Lower leg skin (tissue), 4 donors: ENCODE measurements at regions of chr3 and their contacts with region 1.

Region 1: DNA sequence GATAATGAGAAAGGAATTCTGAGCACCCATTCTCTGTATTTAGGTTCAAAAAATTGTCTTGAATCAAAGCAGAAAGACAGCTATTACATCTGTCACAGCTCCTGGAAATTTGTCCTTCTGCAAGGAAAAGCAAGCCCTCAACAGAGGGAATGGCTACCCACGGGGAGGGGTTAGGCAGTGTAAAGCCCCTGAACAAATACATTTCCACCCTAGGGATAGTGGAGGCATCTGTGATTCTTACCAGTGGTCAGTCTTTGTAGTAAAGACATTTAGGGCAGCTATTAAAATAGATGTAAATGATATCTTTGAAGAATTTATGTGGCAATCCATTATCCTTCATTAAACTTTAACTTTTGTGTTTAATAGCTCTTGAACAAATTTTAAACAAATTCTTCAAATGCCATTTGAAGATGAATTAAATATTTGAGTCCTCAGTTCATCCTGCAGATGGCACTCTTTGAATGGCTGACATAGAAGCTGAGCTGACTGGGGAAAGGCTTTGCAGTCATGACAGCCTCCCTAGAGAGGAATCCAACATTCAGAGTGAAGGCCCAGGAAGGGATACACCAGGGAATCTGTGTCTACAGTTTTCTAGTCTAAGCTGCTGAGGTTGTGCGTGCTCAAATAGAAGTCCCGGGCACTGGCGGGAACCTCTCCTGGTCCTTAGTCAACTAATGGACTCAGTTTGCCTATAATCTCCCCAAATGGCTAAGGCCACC is 359.7 kb upstream of the ROPN1 start:
- DNase-seq: no peak
- H3K4me3 ChIP-seq: no peak overlapping the region
- CTCF ChIP-seq: no peak
- POLR2A ChIP-seq: no peak

Region 2: GRCh38 chr3:124467980-124468902 is 116.7 kb after region 1 on chr3:
- intact Hi-C with region 1: loop called (anchors 5 kb)
- DNase-seq: no peak
- H3K4me3 ChIP-seq: no peak overlapping the region
- CTCF ChIP-seq: peak in 1 of 3 donors; percentile 46
- POLR2A ChIP-seq: no peak

Region 3: GRCh38 chr3:124520970-124521369 is 169.4 kb after region 1 on chr3:
- intact Hi-C with region 1: no loop called
- DNase-seq: no peak
- H3K4me3 ChIP-seq: no peak overlapping the region
- CTCF ChIP-seq: no peak
- POLR2A ChIP-seq: no peak

Region 4: DNA sequence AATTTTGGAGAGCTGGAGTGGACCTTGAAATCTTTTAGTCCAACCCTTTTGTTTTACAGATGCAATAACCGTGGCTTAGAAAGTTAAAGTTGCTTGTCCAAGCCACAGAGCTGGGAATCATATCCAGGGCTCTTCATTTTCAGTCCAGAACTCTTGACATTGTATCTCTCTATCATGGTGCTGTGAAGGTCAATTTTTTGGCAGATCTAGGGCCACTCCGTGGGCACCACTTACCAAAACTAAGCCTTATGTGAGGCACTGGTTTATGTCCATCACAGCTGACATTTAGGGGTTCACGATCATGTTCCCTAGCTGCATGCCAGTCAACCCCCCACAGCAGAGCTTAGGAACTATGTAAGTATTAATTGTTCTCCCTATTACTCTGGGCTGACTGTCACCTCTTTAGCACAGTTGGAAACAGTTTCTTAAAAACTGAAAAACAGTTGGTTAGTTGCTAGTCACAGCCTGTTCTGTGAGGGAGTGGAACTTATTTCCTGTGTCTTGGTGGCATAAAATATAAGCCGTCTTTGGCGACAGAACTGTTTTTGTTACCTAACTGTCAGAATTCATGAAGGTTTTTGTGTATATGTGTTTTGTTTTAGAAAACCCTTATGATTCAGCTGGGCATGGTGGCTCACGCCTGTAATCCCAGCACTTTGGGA is 189.1 kb after region 1 on chr3:
- intact Hi-C with region 1: loop called (anchors 10 kb)
- DNase-seq: no peak
- H3K4me3 ChIP-seq: no peak overlapping the region
- CTCF ChIP-seq: no peak
- POLR2A ChIP-seq: no peak